ENCODE measurements at regions of chr4 and their contacts with region 1.

Region 1: DNA sequence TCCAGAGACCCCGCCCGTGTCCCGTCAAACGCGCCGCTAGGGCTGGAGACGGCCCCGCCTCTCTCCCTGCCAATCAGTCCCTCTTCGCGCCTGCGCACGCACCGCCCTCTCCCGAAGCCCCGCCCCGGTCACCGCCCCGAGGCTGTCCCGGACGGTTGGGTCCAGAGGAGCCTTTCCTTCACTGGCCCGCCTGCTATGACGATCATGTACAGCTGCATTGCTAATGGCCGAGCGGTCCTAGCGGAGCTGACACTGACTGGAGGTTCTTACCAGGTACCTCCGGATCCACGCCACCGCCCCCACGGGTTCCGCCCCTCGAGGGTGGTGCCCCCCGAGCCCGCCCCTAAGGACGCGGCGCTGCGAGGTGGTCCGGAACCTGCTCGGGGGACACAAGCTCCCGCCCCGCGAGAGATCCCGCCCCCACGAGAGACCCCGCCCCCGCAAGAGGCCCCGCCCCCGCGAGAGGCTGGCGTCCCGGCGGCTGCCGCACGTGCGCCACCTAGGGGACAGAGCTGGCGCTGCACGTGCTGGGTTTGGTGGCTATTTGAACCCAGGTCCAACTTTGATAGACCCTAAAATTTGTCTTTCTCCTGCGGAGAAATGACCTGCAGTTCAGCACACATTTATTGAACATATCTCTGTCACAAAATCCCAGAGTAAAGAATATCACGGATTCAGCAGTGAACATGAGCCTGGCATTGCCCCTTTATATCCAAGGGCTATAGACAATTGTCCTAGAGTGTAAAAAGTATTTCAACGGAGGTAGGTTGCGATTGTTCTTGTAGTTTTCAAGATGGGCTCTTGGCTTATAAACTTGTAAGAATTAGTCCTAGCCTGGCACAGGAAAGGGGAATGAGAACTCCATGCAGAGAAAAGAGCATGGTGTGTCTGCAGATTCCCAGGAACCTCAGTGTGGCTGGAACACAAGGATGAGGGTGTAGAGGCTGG is 88.7 kb downstream of the HNRNPD start:
- DNase-seq: peak; percentile 96 to 100 (median 98)
- ATAC-seq: peak; percentile 92 to 96 (median 94)
- H3K4me3 ChIP-seq: peak overlapping the region; percentile 63 to 68
- H3K4me3 Mint-ChIP-seq: peak overlapping the region; percentile 77 to 81 (median 80)
- H3K27ac ChIP-seq: peak overlapping the region; percentile 68
- H3K27ac Mint-ChIP-seq: peak overlapping the region; percentile 65 to 86
- H3K4me1 ChIP-seq: peaks cover 8 to 12% of the 10 kb centered on the region in 2 experiments
- H3K4me1 Mint-ChIP-seq: peaks cover 13 to 21% (median 16%) of the 10 kb centered on the region in 3 donors
- H3K27me3 ChIP-seq: no peaks in the 10 kb centered on the region
- H3K27me3 Mint-ChIP-seq: no peaks in the 10 kb centered on the region

Region 2: DNA sequence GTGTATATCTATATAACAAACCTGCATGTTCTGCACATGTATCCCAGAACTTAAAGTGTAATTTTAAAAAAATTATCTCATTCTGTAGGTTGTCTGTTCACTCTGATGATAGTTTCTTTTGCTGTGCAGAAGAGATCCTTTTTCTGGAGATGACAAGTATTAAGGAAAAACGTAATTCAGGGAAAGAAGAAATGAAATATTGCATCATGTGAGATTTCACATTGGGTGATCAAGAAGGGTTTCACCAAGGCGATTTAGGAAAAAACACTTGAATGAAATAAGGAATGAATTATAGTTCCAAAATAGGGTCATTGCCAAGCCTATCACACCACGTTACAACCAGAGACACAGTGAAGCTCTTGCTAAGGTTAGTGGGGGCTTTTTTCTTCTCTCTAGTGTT is 139.3 kb before region 1 on chr4:
- CTCF ChIA-PET with region 1: no interaction called
- POLR2A ChIA-PET with region 1: no interaction called
- DNase-seq: no peak
- ATAC-seq: no peak
- H3K4me3 ChIP-seq: no peak overlapping the region
- H3K4me3 Mint-ChIP-seq: no peak overlapping the region
- H3K27ac ChIP-seq: no peak overlapping the region
- H3K27ac Mint-ChIP-seq: no peak overlapping the region
- H3K4me1 ChIP-seq: no peaks in the 10 kb centered on the region
- H3K4me1 Mint-ChIP-seq: peaks cover 0 to 3% (median 0%) of the 10 kb centered on the region in 3 donors
- H3K27me3 ChIP-seq: no peaks in the 10 kb centered on the region
- H3K27me3 Mint-ChIP-seq: no peaks in the 10 kb centered on the region

Region 3: DNA sequence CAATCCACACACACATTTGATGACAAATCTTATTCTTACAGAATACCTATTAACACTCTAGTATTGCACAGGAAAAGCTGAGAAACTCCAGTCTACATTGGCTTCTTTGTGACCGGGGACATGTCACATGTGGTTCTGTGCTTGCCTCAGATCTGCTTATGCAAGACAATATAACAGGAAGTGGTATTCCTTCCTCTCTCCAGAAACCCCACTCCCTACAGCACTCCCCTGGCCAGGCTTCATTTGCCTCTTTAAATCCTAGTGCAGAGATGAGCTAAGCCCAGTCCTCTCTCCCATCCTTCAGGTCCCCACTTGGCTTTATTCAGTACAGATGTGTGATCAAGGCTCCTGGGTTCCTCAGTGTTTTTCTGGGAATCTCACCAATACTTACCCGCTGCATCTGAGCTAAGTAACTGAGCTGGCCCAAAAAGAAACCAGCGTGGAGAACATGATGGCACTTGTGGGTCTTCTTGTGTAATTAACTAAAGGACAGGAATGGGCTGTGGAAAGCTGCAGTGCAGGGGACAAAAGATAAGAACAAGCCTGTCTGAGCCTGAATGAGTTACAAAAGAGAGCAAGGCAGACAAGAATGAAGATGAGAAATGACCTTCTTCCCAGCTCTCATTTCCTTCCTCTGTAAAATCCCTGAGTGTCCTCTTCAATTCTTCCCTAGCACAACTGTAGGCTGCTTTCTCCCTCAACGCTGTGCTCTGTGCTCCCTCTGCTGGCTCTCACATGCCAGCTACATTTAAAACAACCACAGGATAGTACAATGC is 16.9 kb before region 1 on chr4:
- CTCF ChIA-PET with region 1: interaction called, 8 to 19 read pairs
- POLR2A ChIA-PET with region 1: no interaction called
- DNase-seq: peak in 30 of 35 experiments; percentile 6 to 71 (median 30)
- ATAC-seq: peak; percentile 84 to 95 (median 88)
- H3K4me3 ChIP-seq: peak overlapping the region in 1 of 2 donors; percentile 18
- H3K4me3 Mint-ChIP-seq: peak overlapping the region in 1 of 3 donors; percentile 13
- H3K27ac ChIP-seq: no peak overlapping the region
- H3K27ac Mint-ChIP-seq: no peak overlapping the region
- H3K4me1 ChIP-seq: peaks cover 14 to 15% of the 10 kb centered on the region in 2 experiments
- H3K4me1 Mint-ChIP-seq: peaks cover 15 to 36% (median 21%) of the 10 kb centered on the region in 3 donors
- H3K27me3 ChIP-seq: peaks cover 0 to 14% of the 10 kb centered on the region in 2 experiments
- H3K27me3 Mint-ChIP-seq: peaks cover 5 to 9% of the 10 kb centered on the region in 2 donors

Region 4: DNA sequence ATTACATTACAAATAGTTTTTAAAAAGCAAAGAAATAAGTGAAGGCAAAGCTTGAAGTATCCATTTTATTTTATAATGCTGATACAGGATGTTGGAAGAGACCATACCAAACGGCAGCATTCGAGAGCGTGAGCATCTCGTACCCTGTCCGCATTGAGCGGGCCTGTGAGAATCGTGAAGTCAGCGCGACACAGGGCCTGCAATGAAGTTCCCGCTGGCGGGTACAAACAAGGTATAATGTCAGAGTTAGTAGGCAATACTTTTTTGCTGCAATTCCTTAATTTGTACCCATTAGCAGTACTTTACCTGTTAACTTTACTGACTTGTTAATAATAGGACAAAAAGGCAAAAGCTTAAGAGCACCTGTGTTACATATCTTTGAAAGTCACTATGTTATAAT is 69.7 kb after region 1 on chr4:
- CTCF ChIA-PET with region 1: interaction called, 8 to 17 read pairs
- POLR2A ChIA-PET with region 1: no interaction called
- DNase-seq: no peak
- ATAC-seq: no peak
- H3K4me3 ChIP-seq: no peak overlapping the region
- H3K4me3 Mint-ChIP-seq: no peak overlapping the region
- H3K27ac ChIP-seq: no peak overlapping the region
- H3K27ac Mint-ChIP-seq: no peak overlapping the region
- H3K4me1 ChIP-seq: peaks cover 7 to 16% of the 10 kb centered on the region in 2 experiments
- H3K4me1 Mint-ChIP-seq: peaks cover 61 to 71% (median 62%) of the 10 kb centered on the region in 3 donors
- H3K27me3 ChIP-seq: no peaks in the 10 kb centered on the region
- H3K27me3 Mint-ChIP-seq: no peaks in the 10 kb centered on the region

Region 5: DNA sequence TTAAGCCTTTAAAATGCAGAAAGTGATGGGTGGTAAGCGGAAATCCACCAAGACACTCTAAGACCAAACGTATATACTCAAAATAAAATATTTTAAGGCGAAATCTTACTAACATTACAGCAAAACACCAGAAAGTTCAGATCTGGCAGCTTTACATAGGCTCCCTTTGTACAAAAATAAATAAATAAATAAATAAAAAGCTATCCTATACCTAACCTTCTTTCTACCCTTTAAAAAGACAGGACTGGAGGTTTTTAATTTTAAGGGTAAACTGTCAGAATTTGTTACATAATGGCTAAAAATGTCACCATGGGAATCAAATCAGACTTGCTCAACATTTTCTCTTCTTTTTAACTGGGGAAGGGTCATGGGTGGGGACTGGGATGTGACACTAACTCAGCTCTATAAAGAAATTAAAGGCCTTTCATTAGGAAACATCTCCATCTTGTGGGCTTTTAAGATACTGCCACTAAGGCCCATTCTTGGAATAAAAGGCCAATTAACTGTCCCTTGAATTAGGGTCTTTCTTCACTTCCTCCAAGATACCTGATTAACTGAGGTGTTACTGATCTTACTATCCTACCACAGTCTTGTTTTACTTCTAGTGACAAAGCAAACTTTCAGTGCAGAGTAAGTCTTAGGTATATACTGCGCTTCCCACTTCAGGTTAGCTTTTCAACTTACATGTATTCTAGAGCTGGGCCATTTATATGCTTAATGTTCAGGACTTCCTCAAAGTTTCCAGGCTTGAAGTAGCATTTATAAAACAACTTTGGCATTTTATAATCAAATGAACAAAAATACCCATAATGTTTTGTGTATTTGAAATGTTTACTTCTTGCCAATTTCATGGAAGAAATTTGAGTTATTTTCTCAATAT is 75.4 kb after region 1 on chr4:
- CTCF ChIA-PET with region 1: interaction called, 8 to 17 read pairs
- POLR2A ChIA-PET with region 1: no interaction called
- DNase-seq: peak in 2 of 35 experiments; percentile 31 to 56
- ATAC-seq: peak; percentile 59 to 69 (median 66)
- H3K4me3 ChIP-seq: no peak overlapping the region
- H3K4me3 Mint-ChIP-seq: peak overlapping the region in 1 of 3 donors; percentile 32
- H3K27ac ChIP-seq: peak overlapping the region; percentile 6
- H3K27ac Mint-ChIP-seq: no peak overlapping the region
- H3K4me1 ChIP-seq: peaks cover 24 to 56% of the 10 kb centered on the region in 2 experiments
- H3K4me1 Mint-ChIP-seq: peaks cover 87 to 91% (median 91%) of the 10 kb centered on the region in 3 donors
- H3K27me3 ChIP-seq: no peaks in the 10 kb centered on the region
- H3K27me3 Mint-ChIP-seq: no peaks in the 10 kb centered on the region

Region 6: GRCh38 chr4:82373816-82374625 is 88.9 kb after region 1 on chr4 and contains the start of gene HNRNPD:
- CTCF ChIA-PET with region 1: interaction called in 1 of 2 experiments, 15 read pairs
- POLR2A ChIA-PET with region 1: interaction called in 1 of 2 experiments, 3 read pairs
- DNase-seq: peak; percentile 76 to 97 (median 89)
- ATAC-seq: peak; percentile 86 to 90 (median 88)
- H3K4me3 ChIP-seq: peak within 1 kb of the TSS; percentile 90 to 94
- H3K4me3 Mint-ChIP-seq: peak within 1 kb of the TSS; percentile 91 to 99 (median 97)
- H3K27ac ChIP-seq: peak within 1 kb of the TSS; percentile 97
- H3K27ac Mint-ChIP-seq: peak within 1 kb of the TSS; percentile 99
- H3K4me1 ChIP-seq: peaks cover 22 to 35% of the 10 kb centered on the region in 2 experiments
- H3K4me1 Mint-ChIP-seq: peaks cover 49 to 66% (median 49%) of the 10 kb centered on the region in 3 donors
- H3K27me3 ChIP-seq: no peaks in the 10 kb centered on the region
- H3K27me3 Mint-ChIP-seq: no peaks in the 10 kb centered on the region
- total RNA-seq, gene HNRNPD: 193 to 274 (median 202) TPM

Region 7: DNA sequence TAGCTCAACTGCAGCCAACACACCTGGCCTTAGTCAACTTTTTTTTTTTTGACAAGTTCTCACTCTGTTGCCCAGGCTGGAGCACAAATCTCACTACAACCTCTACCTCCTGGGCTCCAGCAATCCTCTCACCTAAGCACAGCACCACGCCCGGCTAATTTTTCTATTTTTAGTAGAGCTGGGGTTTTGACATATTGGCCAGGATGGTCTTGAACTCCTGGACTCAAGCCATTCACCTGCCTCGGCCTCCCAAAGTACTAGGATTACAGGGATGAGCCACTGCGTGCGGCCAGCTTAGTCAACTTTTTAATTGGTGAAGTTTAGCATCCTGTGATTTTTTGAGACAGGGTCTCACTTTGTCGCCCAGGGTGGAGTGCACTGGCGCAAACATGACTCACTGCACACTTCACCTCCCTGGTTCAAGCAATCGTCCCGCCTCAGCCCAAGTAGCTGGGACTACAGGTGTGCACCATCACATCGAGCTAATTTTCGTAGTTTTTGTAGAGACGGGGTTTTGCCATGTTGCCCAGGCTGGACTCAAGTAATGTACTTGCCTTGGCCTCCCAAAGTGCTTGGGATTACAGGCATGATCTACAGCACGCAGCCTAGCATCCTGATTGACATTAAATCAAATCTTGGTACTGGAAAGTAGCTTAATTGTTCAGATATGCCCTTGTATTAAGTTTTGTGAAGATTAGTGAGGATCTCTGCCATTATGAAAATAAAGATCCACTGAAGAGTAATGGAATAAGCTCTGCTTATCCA is 136.8 kb after region 1 on chr4:
- CTCF ChIA-PET with region 1: interaction called in 1 of 2 experiments, 11 read pairs
- POLR2A ChIA-PET with region 1: interaction called in 1 of 2 experiments, 4 read pairs
- DNase-seq: no peak
- ATAC-seq: peak in 3 of 4 experiments; percentile 27 to 40 (median 30)
- H3K4me3 ChIP-seq: no peak overlapping the region
- H3K4me3 Mint-ChIP-seq: no peak overlapping the region
- H3K27ac ChIP-seq: no peak overlapping the region
- H3K27ac Mint-ChIP-seq: no peak overlapping the region
- H3K4me1 ChIP-seq: peaks cover 3 to 6% of the 10 kb centered on the region in 2 experiments
- H3K4me1 Mint-ChIP-seq: peaks cover 30 to 46% (median 33%) of the 10 kb centered on the region in 3 donors
- H3K27me3 ChIP-seq: peaks cover 0 to 6% of the 10 kb centered on the region in 2 experiments
- H3K27me3 Mint-ChIP-seq: peaks cover 4 to 8% of the 10 kb centered on the region in 2 donors

Region 8: DNA sequence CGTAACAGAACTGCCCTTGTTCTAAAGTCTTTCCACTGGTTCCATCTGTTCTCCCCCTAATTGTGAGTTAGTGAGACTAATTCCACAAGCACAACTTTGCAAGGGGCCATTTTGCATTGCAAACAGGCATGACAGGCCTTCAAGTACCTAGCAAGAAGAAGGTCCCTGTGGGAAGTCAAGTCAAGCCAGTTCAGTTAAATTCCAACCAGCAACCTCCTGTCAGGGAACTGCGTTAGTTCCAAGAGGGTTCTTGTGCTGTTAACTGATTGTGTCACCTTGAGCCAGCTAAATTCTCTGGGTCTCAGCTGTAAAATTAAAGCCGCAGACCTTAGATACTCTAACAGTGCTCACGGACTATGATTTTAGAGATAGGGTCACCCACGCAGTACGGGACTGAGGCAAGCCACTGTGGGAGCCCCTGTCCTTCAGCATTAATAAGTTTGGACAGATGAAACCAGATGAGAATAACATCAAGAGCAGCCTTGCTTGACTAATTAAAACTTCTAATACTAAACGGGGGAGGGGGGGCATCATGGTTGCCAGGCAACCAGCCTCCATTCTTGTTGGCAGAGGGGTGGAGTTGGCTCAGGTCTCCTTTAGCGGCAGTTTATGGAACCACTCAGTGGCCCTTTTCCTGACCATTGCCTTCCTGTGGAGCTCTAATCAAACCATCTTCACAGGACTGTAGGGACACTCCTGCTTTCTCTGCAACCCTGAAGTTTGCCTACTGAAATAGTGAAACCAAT is 300.7 kb after region 1 on chr4:
- CTCF ChIA-PET with region 1: no interaction called
- POLR2A ChIA-PET with region 1: no interaction called
- DNase-seq: no peak
- ATAC-seq: no peak
- H3K4me3 ChIP-seq: no peak overlapping the region
- H3K4me3 Mint-ChIP-seq: no peak overlapping the region
- H3K27ac ChIP-seq: no peak overlapping the region
- H3K27ac Mint-ChIP-seq: no peak overlapping the region
- H3K4me1 ChIP-seq: no peaks in the 10 kb centered on the region
- H3K4me1 Mint-ChIP-seq: no peaks in the 10 kb centered on the region
- H3K27me3 ChIP-seq: peaks cover 0 to 4% of the 10 kb centered on the region in 2 experiments
- H3K27me3 Mint-ChIP-seq: peaks cover 0 to 3% of the 10 kb centered on the region in 2 donors

Measured in T-cell (primary cell).